Prostate gland (tissue), 2 donors: ENCODE measurements at regions of chr15 and their contacts with region 1.

Region 1: GRCh38 chr15:100349696-100350433 is 8.1 kb upstream of the ADAMTS17 start:
- DNase-seq: peak; percentile 93
- H3K4me3 ChIP-seq: peak overlapping the region; percentile 69 to 70
- H3K27ac ChIP-seq: peak overlapping the region; percentile 94 to 96
- H3K4me1 ChIP-seq: no peaks in the 10 kb centered on the region
- H3K27me3 ChIP-seq: no peaks in the 10 kb centered on the region
- CTCF ChIP-seq: peak; percentile 64 to 95 (median 84)
- POLR2A ChIP-seq: peak; percentile 25

Region 2: DNA sequence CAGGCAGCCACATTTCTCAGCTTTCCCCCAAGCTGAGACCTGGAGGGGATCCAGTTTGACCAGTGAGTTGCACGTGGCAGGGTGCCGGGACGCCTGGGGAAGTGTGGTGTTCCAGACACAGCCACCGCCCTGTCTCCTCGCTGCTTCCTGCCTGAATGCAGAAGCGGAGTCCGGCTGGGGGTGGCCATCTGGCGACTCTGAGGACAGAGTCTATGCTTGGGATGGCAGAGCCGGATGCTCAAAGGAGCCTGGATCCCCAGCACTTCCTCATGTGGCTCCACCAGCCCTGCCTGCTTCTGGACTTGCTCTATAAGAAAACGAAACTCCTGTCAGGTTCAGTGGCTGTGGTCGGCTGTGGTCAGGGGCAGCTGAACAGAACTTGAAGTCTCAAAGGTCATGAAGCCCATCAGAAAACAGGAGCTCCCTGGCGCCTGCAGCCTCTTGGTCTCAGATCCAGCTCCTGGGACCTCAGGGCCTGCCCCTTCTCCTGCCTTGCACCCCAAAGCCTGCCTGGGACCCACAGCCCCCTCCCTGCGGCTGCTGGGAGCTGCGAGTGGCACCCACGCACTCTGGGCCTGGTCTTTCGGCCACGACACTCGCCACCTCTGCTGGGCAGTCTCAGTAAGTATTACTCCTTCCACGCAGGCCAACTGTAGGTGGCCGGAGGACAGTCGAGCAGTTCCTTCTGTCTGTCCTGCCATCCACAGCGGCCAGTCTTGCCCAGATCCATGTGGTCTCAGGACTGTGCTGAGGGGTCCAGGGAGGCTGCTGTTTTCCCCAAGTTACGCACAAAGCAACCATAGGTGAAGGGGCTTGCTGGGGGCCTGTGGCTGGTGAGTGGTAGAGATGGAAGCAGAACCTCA is 896.9 kb before region 1 on chr15:
- intact Hi-C with region 1: no loop called
- DNase-seq: no peak
- H3K4me3 ChIP-seq: no peak overlapping the region
- H3K27ac ChIP-seq: peak overlapping the region in 1 of 2 donors; percentile 33
- H3K4me1 ChIP-seq: peaks cover 6% of the 10 kb centered on the region
- H3K27me3 ChIP-seq: no peaks in the 10 kb centered on the region
- CTCF ChIP-seq: no peak
- POLR2A ChIP-seq: no peak

Region 3: DNA sequence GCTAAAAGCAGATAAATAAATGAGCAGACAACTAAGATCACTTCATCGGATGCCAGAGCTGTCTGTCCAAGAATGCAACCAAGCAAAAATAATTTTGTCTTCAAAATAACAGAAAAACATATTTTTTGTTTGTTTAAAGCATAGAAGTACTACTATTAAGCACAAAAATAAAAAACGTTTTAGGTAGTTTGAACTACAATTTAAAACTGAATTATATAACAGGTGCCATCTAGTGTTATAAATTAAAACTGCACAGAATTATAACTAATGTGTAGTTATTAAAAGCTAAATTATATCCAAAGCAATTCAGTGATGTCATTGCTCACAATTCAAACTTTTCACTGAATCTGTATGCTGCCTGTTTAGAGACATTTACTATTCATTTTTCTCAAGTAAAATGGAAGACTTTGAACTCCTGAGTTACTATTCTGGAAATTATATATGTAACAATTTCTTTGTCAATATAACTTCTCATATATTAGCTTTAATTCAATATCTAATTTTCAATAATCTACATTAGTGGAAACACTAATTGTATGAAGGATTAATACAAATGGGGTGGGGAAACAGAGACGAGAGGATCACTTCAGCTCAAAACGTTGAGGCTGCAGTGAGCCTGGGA is 222.6 kb after region 1 on chr15:
- intact Hi-C with region 1: loop called (anchors 2 kb)
- DNase-seq: no peak
- H3K4me3 ChIP-seq: no peak overlapping the region
- H3K27ac ChIP-seq: no peak overlapping the region
- H3K4me1 ChIP-seq: no peaks in the 10 kb centered on the region
- H3K27me3 ChIP-seq: no peaks in the 10 kb centered on the region
- CTCF ChIP-seq: peak in 3 of 4 experiments; percentile 53 to 61 (median 56)
- POLR2A ChIP-seq: no peak

Region 4: DNA sequence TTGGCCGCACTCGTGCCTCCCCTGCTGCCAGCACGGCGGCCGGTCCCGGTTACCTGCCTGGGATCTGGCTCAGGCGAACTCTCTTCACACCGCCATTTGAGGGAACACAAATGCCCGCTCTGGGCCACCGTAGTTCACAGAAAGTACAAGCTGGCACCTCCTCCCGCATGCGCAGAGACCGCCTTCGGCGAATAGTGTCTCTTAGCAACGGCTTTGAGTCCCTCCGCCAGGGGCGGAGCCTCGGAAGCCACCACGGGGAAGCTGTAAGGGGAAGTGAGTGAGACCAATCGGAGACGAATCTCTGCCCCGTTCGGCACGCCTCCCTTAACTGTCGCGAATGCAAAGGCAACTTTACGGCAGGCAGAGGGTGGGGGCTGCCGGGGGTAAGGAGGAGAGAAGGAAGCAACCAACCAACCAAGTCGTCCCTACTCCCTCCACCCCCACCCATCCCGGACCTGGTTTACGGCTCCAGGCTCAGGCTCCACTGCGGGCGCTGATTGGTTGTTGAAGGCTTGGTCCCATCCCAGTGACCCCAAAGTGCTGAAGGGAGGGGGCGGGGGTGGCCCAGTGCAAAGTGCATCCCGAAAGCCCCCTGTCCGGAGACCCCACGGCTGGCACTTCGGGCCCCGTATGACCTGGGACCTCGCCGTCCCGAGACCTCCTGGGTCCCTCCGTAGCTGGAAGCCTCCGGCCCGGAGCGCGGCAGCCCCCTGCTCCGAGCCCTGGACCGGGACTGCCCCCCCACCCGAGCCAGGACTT is 252.4 kb after region 1 on chr15 and contains the starts of genes ASB7 and LINS1:
- intact Hi-C with region 1: loop called (anchors 10 kb)
- DNase-seq: peak; percentile 100
- H3K4me3 ChIP-seq: peak within 1 kb of the TSS; percentile 79 to 84
- H3K27ac ChIP-seq: peak within 1 kb of the TSS; percentile 82 to 85
- H3K4me1 ChIP-seq: peaks cover 16% of the 10 kb centered on the region
- H3K27me3 ChIP-seq: no peaks in the 10 kb centered on the region
- CTCF ChIP-seq: peak in 1 of 4 experiments; percentile 40
- POLR2A ChIP-seq: peak; percentile 36
- total RNA-seq, gene ASB7: 17.3 to 22.3 TPM
- total RNA-seq, gene LINS1: 15.5 to 32.3 TPM

Region 5: GRCh38 chr15:101008158-101009139 is 658.6 kb after region 1 on chr15:
- intact Hi-C with region 1: loop called (anchors 10 kb)
- DNase-seq: peak; percentile 83
- H3K4me3 ChIP-seq: peak overlapping the region; percentile 25 to 26
- H3K27ac ChIP-seq: peak overlapping the region in 1 of 2 donors; percentile 51
- H3K4me1 ChIP-seq: no peaks in the 10 kb centered on the region
- H3K27me3 ChIP-seq: no peaks in the 10 kb centered on the region
- CTCF ChIP-seq: peak; percentile 85 to 96 (median 94)
- POLR2A ChIP-seq: no peak